ENCODE measurements at regions of chr5 and their contacts with region 1.

Region 1: DNA sequence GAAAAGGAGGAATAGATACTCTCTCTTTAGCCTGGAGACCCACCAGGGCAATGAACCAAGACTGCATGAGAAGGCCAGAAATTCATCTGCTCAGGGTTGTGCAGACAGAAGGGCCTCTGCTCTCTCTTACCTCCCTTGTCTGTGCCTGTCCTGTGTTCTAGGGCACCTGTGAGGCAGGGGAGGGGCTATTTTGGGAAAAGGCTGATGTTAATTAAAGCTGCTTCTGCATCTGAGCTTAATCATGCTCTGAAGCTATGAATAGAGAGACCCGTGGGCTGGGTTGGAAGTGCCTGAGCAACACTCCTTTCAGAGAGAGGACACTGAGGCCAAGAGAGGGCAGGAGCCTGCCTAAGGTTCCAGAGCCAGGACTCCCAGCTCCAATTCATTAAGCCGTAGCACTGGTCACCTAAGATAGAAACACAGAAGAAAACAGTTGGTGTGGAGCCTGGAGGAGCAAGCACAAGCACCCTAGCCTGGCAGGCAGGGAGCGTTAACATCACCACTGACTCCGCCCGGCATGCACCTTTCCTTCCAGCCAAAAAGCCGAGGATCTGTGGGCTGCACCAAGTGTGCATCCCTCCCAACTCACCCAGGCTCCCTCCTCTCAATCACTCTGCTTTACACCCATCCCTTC is 31.4 kb upstream of the STING1 start:
- DNase-seq: no peak
- ATAC-seq: no peak
- H3K4me3 ChIP-seq: no peak overlapping the region
- H3K27ac ChIP-seq: no peak overlapping the region
- H3K4me1 ChIP-seq: no peaks in the 10 kb centered on the region
- H3K27me3 ChIP-seq: no peaks in the 10 kb centered on the region
- CTCF ChIP-seq: no peak
- POLR2A ChIP-seq: no peak

Region 2: DNA sequence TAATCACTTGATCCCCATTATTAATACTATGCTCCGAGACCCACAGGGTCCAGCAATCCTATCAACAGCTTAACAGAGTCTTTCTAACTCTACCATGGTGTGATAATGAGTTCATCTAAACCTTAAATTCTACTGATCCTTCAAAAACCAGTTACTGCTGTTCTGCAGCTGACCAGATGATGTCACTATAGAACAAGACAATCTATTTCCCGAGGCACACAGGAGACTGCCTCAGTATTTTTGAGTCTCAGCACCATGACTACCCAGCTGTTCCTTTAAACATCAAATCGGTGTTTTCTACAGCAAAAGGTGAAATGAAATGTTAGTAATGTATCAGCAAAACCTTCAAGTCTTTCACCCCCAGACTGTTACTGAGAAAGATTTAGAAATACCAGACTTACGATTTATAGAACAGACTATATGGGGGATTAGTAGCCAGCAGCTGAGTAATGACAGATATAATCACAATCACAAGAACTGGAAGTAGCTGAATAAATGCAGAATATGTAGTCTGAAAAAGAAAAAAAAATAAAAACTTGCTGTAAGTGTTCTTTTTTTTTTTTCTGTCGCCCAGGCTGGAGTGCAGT is 91.6 kb before region 1 on chr5:
- intact Hi-C with region 1: loop called (anchors 5 kb)
- DNase-seq: peak in 1 of 3 donors; percentile 44
- ATAC-seq: peak; percentile 91 to 95 (median 94)
- H3K4me3 ChIP-seq: no peak overlapping the region
- H3K27ac ChIP-seq: no peak overlapping the region
- H3K4me1 ChIP-seq: no peaks in the 10 kb centered on the region
- H3K27me3 ChIP-seq: no peaks in the 10 kb centered on the region
- CTCF ChIP-seq: peak; percentile 79 to 88 (median 86)
- POLR2A ChIP-seq: no peak

Region 3: DNA sequence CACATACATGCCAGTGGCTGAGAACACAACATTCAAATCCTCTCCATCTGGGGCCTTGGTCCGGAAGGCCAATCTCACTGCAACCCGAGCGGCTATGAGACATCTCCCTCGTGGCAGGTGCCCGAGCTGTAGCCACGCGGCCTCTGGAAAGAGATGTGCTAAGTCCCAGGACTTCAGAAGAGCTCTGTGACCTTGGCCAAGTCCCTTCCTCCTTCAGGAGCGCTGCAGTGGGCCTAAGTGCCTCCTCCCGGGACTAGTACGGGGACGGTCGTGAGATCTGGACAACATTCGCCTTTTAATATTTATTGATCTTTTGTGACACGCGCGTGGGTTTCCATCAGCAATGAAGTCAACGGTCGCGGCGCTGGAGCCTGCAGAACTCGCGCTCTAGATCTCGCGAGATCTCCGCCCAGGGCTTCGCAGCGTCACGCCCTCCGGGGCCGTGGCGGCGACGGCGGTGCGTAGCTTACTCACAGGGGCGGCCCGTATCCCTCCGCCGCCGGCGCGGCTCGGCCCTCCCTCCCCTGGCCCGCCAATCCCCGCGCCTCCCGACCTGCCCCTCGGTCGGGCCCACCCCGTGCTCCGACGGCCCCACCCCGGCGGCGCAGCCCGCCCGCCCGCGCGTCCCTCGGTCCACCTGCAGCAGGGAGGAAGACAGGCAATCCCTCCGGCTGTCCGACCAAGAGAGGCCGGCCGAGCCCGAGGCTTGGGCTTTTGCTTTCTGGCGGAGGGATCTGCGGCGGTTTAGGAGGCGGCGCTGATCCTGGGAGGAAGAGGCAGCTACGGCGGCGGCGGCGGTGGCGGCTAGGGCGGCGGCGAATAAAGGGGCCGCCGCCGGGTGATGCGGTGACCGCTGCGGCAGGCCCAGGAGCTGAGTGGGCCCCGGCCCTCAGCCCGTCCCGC is 47.0 kb after region 1 on chr5 and contains the start of gene UBE2D2:
- intact Hi-C with region 1: no loop called
- DNase-seq: peak; percentile 98 to 99 (median 98)
- ATAC-seq: peak; percentile 96 to 99 (median 97)
- H3K4me3 ChIP-seq: peak within 1 kb of the TSS; percentile 89 to 93 (median 92)
- H3K27ac ChIP-seq: peak within 1 kb of the TSS; percentile 89 to 96 (median 91)
- H3K4me1 ChIP-seq: peaks cover 0 to 25% (median 4%) of the 10 kb centered on the region in 4 donors
- H3K27me3 ChIP-seq: no peaks in the 10 kb centered on the region
- CTCF ChIP-seq: no peak
- POLR2A ChIP-seq: peak; percentile 92
- total RNA-seq, gene UBE2D2: 38.3 to 68.3 (median 53.1) TPM

Region 4: DNA sequence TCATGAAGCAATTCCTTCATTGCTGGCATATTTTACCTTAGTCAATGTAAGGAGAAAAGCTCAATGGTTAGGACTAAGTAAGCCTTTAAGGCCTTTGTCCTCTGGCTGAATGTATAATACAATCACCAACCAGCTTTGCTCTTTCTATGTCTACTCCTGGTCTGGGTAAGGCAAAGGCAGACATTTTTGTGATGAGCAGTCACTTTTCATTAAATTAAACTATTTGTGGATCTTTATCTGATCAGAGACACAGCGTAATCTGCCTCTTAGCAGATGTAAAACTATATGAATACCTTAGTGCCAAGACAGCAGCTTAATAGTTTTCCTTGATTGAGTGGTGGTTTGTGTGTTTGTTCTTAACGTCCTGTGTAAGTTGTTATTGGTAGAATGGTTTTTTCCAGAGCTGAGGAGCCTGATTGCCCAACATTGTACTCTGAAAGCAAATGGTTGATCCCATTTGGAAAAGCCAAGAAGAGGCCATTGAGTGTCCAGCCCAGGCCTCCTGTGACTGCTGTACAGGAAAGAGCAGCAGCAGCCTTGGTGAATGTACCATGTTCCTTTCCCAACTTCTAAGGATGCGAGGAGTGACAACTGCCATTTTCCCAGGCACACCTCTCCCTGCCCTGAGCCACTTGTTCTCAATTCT is 117.7 kb after region 1 on chr5:
- intact Hi-C with region 1: no loop called
- DNase-seq: no peak
- ATAC-seq: peak in 1 of 4 donors; percentile 12
- H3K4me3 ChIP-seq: no peak overlapping the region
- H3K27ac ChIP-seq: no peak overlapping the region
- H3K4me1 ChIP-seq: peaks cover 4 to 23% (median 8%) of the 10 kb centered on the region in 4 donors
- H3K27me3 ChIP-seq: no peaks in the 10 kb centered on the region
- CTCF ChIP-seq: no peak
- POLR2A ChIP-seq: no peak

Region 5: DNA sequence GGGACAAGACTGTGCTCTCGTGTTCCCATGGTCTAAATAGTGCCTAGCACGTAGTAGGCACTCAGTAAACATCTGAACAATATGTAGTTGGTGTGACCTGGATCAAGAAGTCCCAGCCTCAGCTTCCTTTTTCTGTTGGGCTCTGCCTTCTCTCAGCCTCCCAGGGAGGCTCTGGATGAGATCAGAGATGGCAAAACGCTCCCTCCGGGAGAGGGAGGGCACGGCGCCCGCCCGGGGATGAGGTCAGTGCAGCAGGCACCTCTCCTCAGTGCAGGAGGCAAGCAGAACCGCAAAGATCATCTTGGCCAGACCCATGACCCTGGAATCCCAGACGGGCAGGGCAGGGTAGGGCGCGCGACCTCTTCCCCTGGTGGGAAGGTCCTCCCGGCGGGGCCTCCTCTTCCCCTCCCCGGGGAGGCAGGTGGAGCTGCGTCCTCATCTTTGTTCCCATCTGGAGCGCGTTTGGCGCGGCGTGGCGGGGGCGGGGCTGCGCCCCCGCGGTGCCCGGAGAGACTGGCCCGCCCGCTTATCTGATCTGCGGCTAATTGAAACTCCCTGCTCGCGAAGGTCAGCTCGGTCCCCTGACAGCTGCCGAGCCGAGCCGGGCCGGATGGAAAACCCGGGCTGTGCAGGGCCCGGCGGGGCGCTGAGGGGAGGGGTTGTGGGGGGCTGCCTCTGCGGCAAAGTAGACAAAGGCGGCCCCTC is 195.1 kb after region 1 on chr5:
- intact Hi-C with region 1: no loop called
- DNase-seq: peak in 1 of 3 donors; percentile 68
- ATAC-seq: peak; percentile 48 to 73 (median 55)
- H3K4me3 ChIP-seq: peak overlapping the region in 1 of 3 donors; percentile 27
- H3K27ac ChIP-seq: no peak overlapping the region
- H3K4me1 ChIP-seq: peaks cover 0 to 11% (median under 1%) of the 10 kb centered on the region in 4 donors
- H3K27me3 ChIP-seq: peaks cover 0 to 5% of the 10 kb centered on the region in 2 donors
- CTCF ChIP-seq: no peak
- POLR2A ChIP-seq: no peak